Activated naive CD8-positive, alpha-beta T cell treated with anti-CD3 and anti-CD28 coated beads, Interleukin-2, amount 10 ng/mL, durations not matched to agents 7 days and 5 days (primary cell): ENCODE measurements at regions of chr21 and their contacts with region 1.

Region 1: DNA sequence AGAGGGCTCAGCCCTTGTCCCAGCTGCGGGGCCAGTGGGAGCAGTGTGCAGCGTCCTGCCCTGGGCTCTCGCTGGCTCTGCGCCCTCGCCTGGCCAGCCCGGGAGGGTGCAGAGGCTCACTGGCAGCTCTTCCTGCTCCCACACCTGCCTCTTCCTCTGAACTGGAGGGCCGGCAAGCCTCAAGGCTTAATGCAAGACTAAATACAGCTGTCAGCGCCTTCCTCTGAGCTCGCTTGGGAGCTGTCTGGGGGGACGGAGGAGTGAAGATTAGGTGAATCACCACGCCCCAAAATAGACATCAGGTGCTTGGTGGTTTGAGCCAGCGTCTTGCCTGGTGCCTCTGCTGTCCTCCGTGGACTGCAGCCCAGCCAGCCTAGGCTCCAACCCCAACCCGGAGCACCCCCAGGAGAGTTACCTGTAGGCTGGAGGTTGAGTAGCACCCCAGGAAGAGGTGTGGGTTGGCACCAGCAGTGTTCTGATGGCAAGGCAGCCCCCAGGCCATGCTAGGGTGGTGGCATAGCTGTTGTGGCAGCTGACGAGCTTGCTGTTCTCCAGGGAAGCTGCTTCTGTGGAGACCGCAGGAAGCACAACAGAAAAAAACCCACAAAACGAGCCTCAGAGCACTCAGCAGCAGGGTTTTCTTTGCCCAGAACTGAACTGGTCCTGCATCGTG is 36.9 kb downstream of the UMODL1 start:
- DNase-seq: peak; percentile 83
- ATAC-seq: peak; percentile 99
- H3K4me3 Mint-ChIP-seq: peak overlapping the region; percentile 41
- H3K27ac Mint-ChIP-seq: peak overlapping the region; percentile 64
- H3K4me1 Mint-ChIP-seq: peaks cover 3% of the 10 kb centered on the region
- H3K27me3 Mint-ChIP-seq: no peaks in the 10 kb centered on the region

Region 2: DNA sequence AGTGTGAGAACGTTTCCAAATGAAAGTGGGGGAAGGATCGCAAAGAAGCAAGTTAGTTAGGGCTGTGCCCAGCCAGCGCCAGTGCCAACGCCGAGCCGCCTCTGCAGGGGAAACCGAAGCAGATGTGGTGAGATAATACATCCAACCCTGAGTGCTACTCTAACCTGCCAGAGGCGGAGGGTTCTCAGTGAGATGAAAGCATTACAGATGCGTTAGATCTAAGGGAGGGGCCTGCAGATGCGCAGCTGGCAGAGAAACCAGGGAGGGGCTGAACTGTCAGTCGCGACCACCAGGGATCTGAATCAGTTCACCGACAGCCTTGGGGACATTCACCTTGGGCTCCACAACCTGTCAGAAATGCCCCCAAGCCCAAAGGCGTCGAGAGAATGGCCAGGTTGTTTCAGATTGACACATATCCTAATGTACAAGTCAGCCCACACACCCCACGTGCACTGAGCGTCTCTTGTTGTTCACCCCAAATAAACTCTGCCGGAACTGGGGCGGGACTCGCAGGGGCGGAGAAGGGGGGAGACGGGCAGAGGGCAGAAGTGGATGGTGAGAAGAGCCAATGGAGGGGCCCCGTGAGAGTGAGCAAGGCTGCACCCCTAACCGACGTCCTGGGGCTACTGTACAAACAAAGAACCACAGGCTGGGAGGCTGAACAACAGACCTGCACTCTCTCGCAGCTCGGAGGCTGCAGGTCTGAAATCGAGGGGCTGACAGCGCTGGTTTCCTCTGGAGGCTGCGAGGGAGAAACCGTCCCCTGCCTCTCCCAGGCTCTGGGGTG is 45.6 kb before region 1 on chr21:
- POLR2A ChIA-PET with region 1: interaction called, 24 read pairs
- DNase-seq: peak; percentile 81
- ATAC-seq: peak; percentile 82
- H3K4me3 Mint-ChIP-seq: peak overlapping the region; percentile 87
- H3K27ac Mint-ChIP-seq: peak overlapping the region; percentile 96
- H3K4me1 Mint-ChIP-seq: peaks cover 43% of the 10 kb centered on the region
- H3K27me3 Mint-ChIP-seq: no peaks in the 10 kb centered on the region